GM12878 (cell line): ENCODE measurements at regions of chr15 and their contacts with region 1.

Region 1: DNA sequence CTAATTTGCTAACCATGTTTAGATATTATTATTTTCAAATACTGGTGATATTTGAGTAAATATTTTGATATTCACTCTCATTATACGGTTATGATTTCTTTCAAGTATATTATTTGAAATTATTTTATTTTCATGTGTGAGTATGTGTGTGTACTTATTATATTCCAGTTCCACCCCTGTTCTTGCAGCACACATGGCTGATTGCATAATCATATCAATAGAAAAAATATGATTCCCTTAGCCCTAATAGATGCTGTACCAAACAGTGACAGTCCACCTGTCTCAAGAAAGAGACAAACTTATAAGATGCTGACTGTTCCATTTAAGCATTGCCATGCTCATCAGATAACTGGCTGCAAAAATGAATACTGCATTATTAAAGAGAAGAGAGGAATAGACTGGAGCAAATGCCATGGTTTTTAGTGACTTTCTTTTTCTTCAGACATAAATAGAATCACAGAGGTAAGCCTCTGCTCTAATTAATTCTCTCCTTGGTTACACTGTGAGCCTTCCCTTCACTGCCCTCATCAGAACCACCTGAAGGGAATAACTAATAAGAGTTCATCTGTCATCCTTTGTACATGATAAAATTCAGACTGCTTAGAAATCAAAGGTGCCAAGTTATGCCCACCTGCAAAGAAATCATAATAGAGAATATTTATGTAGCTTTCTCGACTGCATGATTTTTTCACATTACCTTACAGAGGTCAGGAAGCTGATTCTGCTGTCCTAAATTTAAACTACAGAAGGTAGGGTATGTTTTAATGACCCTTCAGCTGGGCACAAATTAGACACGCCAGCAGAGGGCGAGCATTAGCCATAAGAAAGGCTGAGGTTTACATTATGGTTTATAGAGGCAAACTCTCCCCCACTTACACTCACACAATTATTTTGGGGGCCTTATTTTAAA is 15.7 kb upstream of the UNC13C start:
- DNase-seq: no peak
- ATAC-seq: peak; percentile 94
- H3K4me3 ChIP-seq: no peak overlapping the region
- H3K27ac ChIP-seq: no peak overlapping the region
- H3K4me1 ChIP-seq: no peaks in the 10 kb centered on the region
- H3K27me3 ChIP-seq: no peaks in the 10 kb centered on the region
- CTCF ChIP-seq: peak; percentile 42 to 70 (median 61)
- EP300 ChIP-seq: no peak
- POLR2A ChIP-seq: no peak
- RAD21 ChIP-seq: peak; percentile 68

Region 2: GRCh38 chr15:53759411-53759931 is 203.1 kb before region 1 on chr15 and contains the start of gene WDR72:
- CTCF ChIA-PET with region 1: no interaction called
- POLR2A ChIA-PET with region 1: no interaction called
- RAD21 ChIA-PET with region 1: no interaction called
- SMC1A ChIA-PET with region 1: no interaction called
- in situ Hi-C with region 1: no loop called
- intact Hi-C with region 1: no loop called
- DNase-seq: no peak
- ATAC-seq: peak; percentile 28; the same call in 2 of the 3 replicates
- H3K4me3 ChIP-seq: no peak within 1 kb of the TSS
- H3K27ac ChIP-seq: no peak within 1 kb of the TSS
- H3K4me1 ChIP-seq: no peaks in the 10 kb centered on the region
- H3K27me3 ChIP-seq: peaks cover 0 to 2% of the 10 kb centered on the region in 2 experiments; a peak in 2 of 4 replicates
- CTCF ChIP-seq: no peak
- EP300 ChIP-seq: no peak
- POLR2A ChIP-seq: no peak
- RAD21 ChIP-seq: no peak
- polyA plus RNA-seq, gene WDR72: not detected

Region 3: DNA sequence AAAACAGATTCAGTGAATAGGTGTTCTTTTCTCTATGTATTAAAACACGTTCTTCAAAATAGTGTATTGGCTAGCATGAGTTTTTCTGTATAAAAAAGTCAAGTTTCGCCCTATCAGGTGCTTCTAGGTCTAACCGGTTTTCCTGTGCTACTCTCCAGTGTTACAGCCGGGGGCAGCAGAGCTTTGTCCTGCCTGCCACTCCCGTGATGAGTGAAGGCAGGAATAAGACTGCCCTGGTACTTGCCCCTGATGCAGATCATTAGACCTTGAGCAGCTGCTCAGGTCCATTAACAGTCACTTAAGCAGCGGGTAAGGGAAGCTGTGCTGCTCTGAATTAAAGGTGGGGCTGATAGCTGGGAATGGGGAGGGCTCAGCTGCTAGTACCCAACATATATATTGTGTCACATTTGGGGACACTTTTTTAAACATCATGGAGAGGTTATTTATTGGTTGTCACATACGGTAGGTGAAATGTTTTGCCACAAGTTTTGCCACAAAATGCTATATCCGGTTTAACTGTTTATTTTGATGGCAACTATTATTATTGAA is 14.3 kb after region 1 on chr15:
- CTCF ChIA-PET with region 1: interaction called, 23 read pairs
- POLR2A ChIA-PET with region 1: no interaction called
- RAD21 ChIA-PET with region 1: interaction called, 14 read pairs
- SMC1A ChIA-PET with region 1: interaction called, 35 read pairs
- in situ Hi-C with region 1: no loop called
- intact Hi-C with region 1: no loop called
- DNase-seq: no peak
- ATAC-seq: peak; percentile 72
- H3K4me3 ChIP-seq: no peak overlapping the region
- H3K27ac ChIP-seq: no peak overlapping the region
- H3K4me1 ChIP-seq: no peaks in the 10 kb centered on the region
- H3K27me3 ChIP-seq: no peaks in the 10 kb centered on the region
- CTCF ChIP-seq: peak in 2 of 3 experiments; percentile 34 to 62; a peak in 2 of 6 replicates
- EP300 ChIP-seq: no peak
- POLR2A ChIP-seq: no peak
- RAD21 ChIP-seq: peak; percentile 24; the same call in 1 of the 2 replicates

Region 4: GRCh38 chr15:54045397-54045796 is 82.8 kb after region 1 on chr15:
- CTCF ChIA-PET with region 1: no interaction called
- POLR2A ChIA-PET with region 1: no interaction called
- RAD21 ChIA-PET with region 1: no interaction called
- SMC1A ChIA-PET with region 1: no interaction called
- in situ Hi-C with region 1: no loop called
- intact Hi-C with region 1: no loop called
- DNase-seq: no peak
- ATAC-seq: peak; percentile 45; the same call in 2 of the 3 replicates
- H3K4me3 ChIP-seq: no peak overlapping the region
- H3K27ac ChIP-seq: no peak overlapping the region
- H3K4me1 ChIP-seq: no peaks in the 10 kb centered on the region
- H3K27me3 ChIP-seq: no peaks in the 10 kb centered on the region
- CTCF ChIP-seq: no peak
- EP300 ChIP-seq: no peak
- POLR2A ChIP-seq: no peak
- RAD21 ChIP-seq: no peak

Region 5: DNA sequence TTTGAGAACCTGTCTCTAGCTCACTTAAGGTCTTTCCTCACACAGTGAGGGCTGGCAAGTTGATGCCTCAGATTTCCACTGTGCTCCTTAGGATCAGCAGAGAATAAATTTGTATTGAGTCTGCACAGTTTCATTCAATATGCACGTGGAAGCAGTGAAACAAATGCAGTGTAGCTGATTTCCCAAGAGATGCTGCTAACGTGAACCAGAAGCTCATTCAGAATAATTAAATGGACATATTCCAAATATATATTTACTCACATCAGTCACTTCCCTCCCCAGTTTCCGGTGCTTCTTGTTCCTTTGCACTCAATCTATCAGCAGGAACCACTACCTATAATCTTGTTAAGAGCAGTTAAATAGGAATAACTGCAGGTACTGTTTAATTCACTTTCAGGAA is 101.8 kb after region 1 on chr15:
- CTCF ChIA-PET with region 1: interaction called, 10 read pairs
- POLR2A ChIA-PET with region 1: no interaction called
- RAD21 ChIA-PET with region 1: interaction called, 4 read pairs
- SMC1A ChIA-PET with region 1: interaction called, 12 read pairs
- in situ Hi-C with region 1: no loop called
- intact Hi-C with region 1: no loop called
- DNase-seq: no peak
- ATAC-seq: no peak
- H3K4me3 ChIP-seq: no peak overlapping the region
- H3K27ac ChIP-seq: no peak overlapping the region
- H3K4me1 ChIP-seq: no peaks in the 10 kb centered on the region
- H3K27me3 ChIP-seq: no peaks in the 10 kb centered on the region
- CTCF ChIP-seq: no peak
- EP300 ChIP-seq: no peak
- POLR2A ChIP-seq: no peak
- RAD21 ChIP-seq: no peak

Region 6: DNA sequence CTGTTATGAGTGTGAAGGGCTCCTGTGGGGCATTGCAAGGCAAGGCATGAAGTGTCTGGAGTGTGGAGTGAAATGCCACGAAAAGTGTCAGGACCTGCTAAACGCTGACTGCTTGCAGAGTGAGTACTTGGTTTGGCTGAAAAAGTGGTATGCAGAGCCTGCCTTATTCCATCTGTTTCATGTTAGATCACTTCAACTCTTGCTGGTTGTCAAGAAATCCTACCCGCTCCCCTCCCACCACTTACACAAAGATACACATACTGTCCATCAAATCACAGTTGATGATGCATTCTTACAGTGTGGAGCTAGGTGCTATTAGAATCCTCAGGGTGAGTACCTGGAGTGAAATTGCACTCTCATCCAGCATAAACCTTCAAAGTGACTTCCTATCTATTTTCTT is 287.7 kb after region 1 on chr15:
- CTCF ChIA-PET with region 1: no interaction called
- POLR2A ChIA-PET with region 1: no interaction called
- RAD21 ChIA-PET with region 1: no interaction called
- SMC1A ChIA-PET with region 1: no interaction called
- in situ Hi-C with region 1: no loop called
- intact Hi-C with region 1: no loop called
- DNase-seq: no peak
- ATAC-seq: no peak
- H3K4me3 ChIP-seq: no peak overlapping the region
- H3K27ac ChIP-seq: no peak overlapping the region
- H3K4me1 ChIP-seq: no peaks in the 10 kb centered on the region
- H3K27me3 ChIP-seq: no peaks in the 10 kb centered on the region
- CTCF ChIP-seq: no peak
- EP300 ChIP-seq: no peak
- POLR2A ChIP-seq: no peak
- RAD21 ChIP-seq: no peak

Region 7: GRCh38 chr15:55108858-55109518 is 1146.4 kb after region 1 on chr15:
- CTCF ChIA-PET with region 1: interaction called, 22 read pairs
- POLR2A ChIA-PET with region 1: no interaction called
- RAD21 ChIA-PET with region 1: interaction called, 9 read pairs
- SMC1A ChIA-PET with region 1: interaction called, 19 read pairs
- in situ Hi-C with region 1: no loop called
- intact Hi-C with region 1: loop called (anchors 1 kb)
- DNase-seq: peak; percentile 9
- ATAC-seq: peak; percentile 91
- H3K4me3 ChIP-seq: no peak overlapping the region
- H3K27ac ChIP-seq: no peak overlapping the region
- H3K4me1 ChIP-seq: no peaks in the 10 kb centered on the region
- H3K27me3 ChIP-seq: no peaks in the 10 kb centered on the region
- CTCF ChIP-seq: peak; percentile 74 to 83 (median 77)
- EP300 ChIP-seq: 0 out of 4 replicates have a peak, but pooled peaks of 1 of the 2 experiments have one; percentile 26
- POLR2A ChIP-seq: no peak
- RAD21 ChIP-seq: peak; percentile 70

Region 8: GRCh38 chr15:55196458-55197361 is 1234.1 kb after region 1 on chr15 and contains the start of gene RSL24D1:
- CTCF ChIA-PET with region 1: interaction called, 12 read pairs
- POLR2A ChIA-PET with region 1: no interaction called
- RAD21 ChIA-PET with region 1: interaction called, 3 read pairs
- SMC1A ChIA-PET with region 1: interaction called, 8 read pairs
- in situ Hi-C with region 1: no loop called
- intact Hi-C with region 1: no loop called
- DNase-seq: peak; percentile 97
- ATAC-seq: peak; percentile 97
- H3K4me3 ChIP-seq: peak within 1 kb of the TSS; percentile 99
- H3K27ac ChIP-seq: peak within 1 kb of the TSS; percentile 93
- H3K4me1 ChIP-seq: peaks cover 2% of the 10 kb centered on the region; the same call in 1 of the 2 replicates
- H3K27me3 ChIP-seq: no peaks in the 10 kb centered on the region
- CTCF ChIP-seq: peak; percentile 33 to 64 (median 44); a peak in 4 of 6 replicates
- EP300 ChIP-seq: 0 out of 4 replicates have a peak, but pooled peaks of 1 of the 2 experiments have one; percentile 34
- POLR2A ChIP-seq: peak; percentile 86
- RAD21 ChIP-seq: 0 out of 2 replicates have a peak, but pooled peaks have one; percentile 26
- polyA plus RNA-seq, gene RSL24D1: 198 to 249 TPM

Region 9: GRCh38 chr15:55290528-55291057 is 1328.0 kb after region 1 on chr15:
- CTCF ChIA-PET with region 1: interaction called, 3 read pairs
- POLR2A ChIA-PET with region 1: no interaction called
- RAD21 ChIA-PET with region 1: no interaction called
- SMC1A ChIA-PET with region 1: interaction called, 6 read pairs
- in situ Hi-C with region 1: no loop called
- intact Hi-C with region 1: loop called (anchors 1 kb)
- DNase-seq: no peak
- ATAC-seq: peak; percentile 83
- H3K4me3 ChIP-seq: peak overlapping the region; percentile 89; the same call in 1 of the 2 replicates
- H3K27ac ChIP-seq: no peak overlapping the region; the same call in 1 of the 2 replicates
- H3K4me1 ChIP-seq: no peaks in the 10 kb centered on the region; the same call in 1 of the 2 replicates
- H3K27me3 ChIP-seq: no peaks in the 10 kb centered on the region
- CTCF ChIP-seq: peak; percentile 90 to 97 (median 92)
- EP300 ChIP-seq: no peak; a peak in 1 of 4 replicates
- POLR2A ChIP-seq: no peak
- RAD21 ChIP-seq: peak; percentile 96